MCF 10A (cell line): ENCODE measurements at regions of chr9 and their contacts with region 1.

Region 1: DNA sequence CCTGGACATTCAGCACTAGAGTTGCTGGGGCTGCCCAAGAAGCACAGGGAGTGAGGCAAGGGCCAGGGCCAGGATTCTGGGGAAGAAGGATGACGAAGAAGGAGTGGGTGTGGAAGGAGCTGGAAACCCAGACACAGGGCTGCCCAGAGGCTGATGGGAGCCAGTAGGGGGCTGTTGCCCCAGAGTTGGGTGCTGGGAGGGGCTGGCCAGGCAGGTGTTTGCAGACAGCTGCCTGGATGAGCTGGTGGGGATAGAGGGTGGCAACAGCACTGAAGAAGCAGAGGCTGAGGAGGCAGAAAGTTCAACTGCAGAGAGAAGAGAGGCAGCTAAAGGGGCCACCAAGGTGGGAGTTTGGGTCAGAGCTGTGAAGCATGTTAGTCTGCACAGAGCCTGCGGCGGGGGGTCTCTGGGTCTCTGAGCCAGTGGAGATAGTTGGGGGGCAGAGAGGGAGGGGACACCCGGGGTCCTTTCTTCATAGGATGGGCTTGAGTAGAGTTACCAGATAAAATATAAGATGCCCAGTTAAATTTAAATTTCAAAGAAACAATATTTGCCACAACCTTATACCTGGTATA is 2.5 kb upstream of the AQP7 start:
- DNase-seq: peak; percentile 46
- H3K4me3 Mint-ChIP-seq: no peak overlapping the region
- H3K27ac Mint-ChIP-seq: peak overlapping the region; percentile 16
- H3K4me1 Mint-ChIP-seq: peaks cover 11% of the 10 kb centered on the region
- H3K27me3 Mint-ChIP-seq: no peaks in the 10 kb centered on the region
- CTCF ChIP-seq: no peak

Region 2: GRCh38 chr9:33290247-33291030 is 114.4 kb before region 1 on chr9 and contains the start of gene NFX1:
- CTCF ChIA-PET with region 1: no interaction called
- POLR2A ChIA-PET with region 1: no interaction called
- intact Hi-C with region 1: loop called (anchors 2 kb)
- DNase-seq: peak; percentile 98
- H3K4me3 Mint-ChIP-seq: peak within 1 kb of the TSS; percentile 100
- H3K27ac Mint-ChIP-seq: peak within 1 kb of the TSS; percentile 100
- H3K4me1 Mint-ChIP-seq: peaks cover 26% of the 10 kb centered on the region
- H3K27me3 Mint-ChIP-seq: no peaks in the 10 kb centered on the region
- CTCF ChIP-seq: no peak
- total RNA-seq, gene NFX1: 66.7 and 78.5 TPM in 2 replicates

Region 3: GRCh38 chr9:33393581-33393980 is 11.3 kb before region 1 on chr9:
- CTCF ChIA-PET with region 1: interaction called, 19 read pairs
- POLR2A ChIA-PET with region 1: no interaction called
- intact Hi-C with region 1: no loop called
- DNase-seq: no peak
- H3K4me3 Mint-ChIP-seq: no peak overlapping the region
- H3K27ac Mint-ChIP-seq: peak overlapping the region; percentile 6
- H3K4me1 Mint-ChIP-seq: peaks cover 27% of the 10 kb centered on the region
- H3K27me3 Mint-ChIP-seq: peaks cover 19% of the 10 kb centered on the region
- CTCF ChIP-seq: no peak

Region 4: GRCh38 chr9:33436440-33436839 is 31.6 kb after region 1 on chr9:
- CTCF ChIA-PET with region 1: interaction called, 10 read pairs
- POLR2A ChIA-PET with region 1: interaction called, 3 read pairs
- intact Hi-C with region 1: no loop called
- DNase-seq: no peak
- H3K4me3 Mint-ChIP-seq: no peak overlapping the region
- H3K27ac Mint-ChIP-seq: no peak overlapping the region
- H3K4me1 Mint-ChIP-seq: peaks cover 30% of the 10 kb centered on the region
- H3K27me3 Mint-ChIP-seq: no peaks in the 10 kb centered on the region
- CTCF ChIP-seq: no peak

Region 5: GRCh38 chr9:33452828-33453271 is 48.0 kb after region 1 on chr9:
- CTCF ChIA-PET with region 1: interaction called, 46 read pairs
- POLR2A ChIA-PET with region 1: interaction called, 4 read pairs
- intact Hi-C with region 1: loop called (anchors 1 kb)
- DNase-seq: peak; percentile 96
- H3K4me3 Mint-ChIP-seq: no peak overlapping the region
- H3K27ac Mint-ChIP-seq: no peak overlapping the region
- H3K4me1 Mint-ChIP-seq: peaks cover 13% of the 10 kb centered on the region
- H3K27me3 Mint-ChIP-seq: no peaks in the 10 kb centered on the region
- CTCF ChIP-seq: peak; percentile 66

Region 6: GRCh38 chr9:33473643-33474352 is 68.9 kb after region 1 on chr9 and contains the start of gene NOL6:
- CTCF ChIA-PET with region 1: interaction called, 114 read pairs
- POLR2A ChIA-PET with region 1: interaction called, 4 read pairs
- intact Hi-C with region 1: no loop called
- DNase-seq: peak; percentile 100
- H3K4me3 Mint-ChIP-seq: peak within 1 kb of the TSS; percentile 97
- H3K27ac Mint-ChIP-seq: peak within 1 kb of the TSS; percentile 89
- H3K4me1 Mint-ChIP-seq: peaks cover 10% of the 10 kb centered on the region
- H3K27me3 Mint-ChIP-seq: no peaks in the 10 kb centered on the region
- CTCF ChIP-seq: no peak
- total RNA-seq, gene NOL6: 37.2 and 48.6 TPM in 2 replicates

Region 7: DNA sequence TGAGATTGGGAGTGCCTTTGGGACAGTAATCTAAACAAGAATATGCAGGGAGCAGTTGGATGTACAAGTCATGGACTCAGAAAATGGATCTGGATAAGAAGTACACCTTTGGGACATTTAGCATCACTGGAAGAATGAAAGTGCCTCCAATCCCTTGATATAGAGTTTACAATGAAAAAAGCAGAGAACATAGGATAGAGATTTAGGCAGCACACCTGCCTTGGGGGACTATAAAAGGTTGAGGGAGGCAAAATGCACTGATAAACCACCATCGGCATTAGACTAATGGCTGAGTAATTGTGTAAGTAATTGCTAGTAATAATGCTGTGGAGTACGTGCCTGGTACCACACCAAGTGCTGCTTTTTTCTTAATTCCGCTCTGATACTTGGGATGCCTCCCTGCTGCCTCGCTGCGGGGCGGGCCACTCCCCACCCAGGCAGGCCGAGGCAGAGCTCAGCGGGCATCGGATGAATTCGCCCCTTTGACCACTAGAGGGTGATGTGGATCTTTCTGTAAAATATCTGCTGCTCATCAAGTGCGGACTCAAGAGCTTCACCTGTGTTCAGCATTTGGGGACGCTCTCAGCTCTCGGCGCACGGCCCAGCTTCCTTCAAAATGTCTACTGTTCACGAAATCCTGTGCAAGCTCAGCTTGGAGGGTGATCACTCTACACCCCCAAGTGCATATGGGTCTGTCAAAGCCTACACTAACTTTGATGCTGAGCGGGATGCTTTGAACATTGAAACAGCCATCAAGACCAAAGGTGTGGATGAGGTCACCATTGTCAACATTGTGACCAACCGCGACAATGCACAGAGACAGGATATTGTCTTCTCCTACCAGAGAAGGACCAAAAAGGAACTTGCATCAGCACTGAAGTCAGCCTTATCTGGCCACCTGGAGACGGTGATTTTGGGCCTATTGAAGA is 219.0 kb after region 1 on chr9:
- CTCF ChIA-PET with region 1: interaction called, 5 read pairs
- POLR2A ChIA-PET with region 1: no interaction called
- intact Hi-C with region 1: loop called (anchors 5 kb)
- DNase-seq: peak; percentile 85
- H3K4me3 Mint-ChIP-seq: no peak overlapping the region
- H3K27ac Mint-ChIP-seq: no peak overlapping the region
- H3K4me1 Mint-ChIP-seq: peaks cover 31% of the 10 kb centered on the region
- H3K27me3 Mint-ChIP-seq: no peaks in the 10 kb centered on the region
- CTCF ChIP-seq: peak; percentile 78